Activated B cell treated with CpG ODN at 0.5 μM for 24 hours (primary cell): ENCODE measurements at regions of chr11 and their contacts with region 1.

Region 1: GRCh38 chr11:72080256-72080974 is at the starts of genes LRRC51 and NUMA1:
- DNase-seq: peak; percentile 94
- ATAC-seq: peak; percentile 90
- H3K4me3 Mint-ChIP-seq: peak within 1 kb of the TSS; percentile 95
- H3K27ac Mint-ChIP-seq: peak within 1 kb of the TSS; percentile 91
- H3K4me1 Mint-ChIP-seq: peaks cover 35% of the 10 kb centered on the region
- H3K27me3 Mint-ChIP-seq: no peaks in the 10 kb centered on the region
- CTCF ChIP-seq: no peak
- total RNA-seq, gene LRRC51: 4.1 and 4.5 TPM in 2 replicates
- total RNA-seq, gene NUMA1: 146 and 163 TPM in 2 replicates

Region 2: GRCh38 chr11:70532071-70532450 is 1548.4 kb before region 1 on chr11:
- CTCF ChIA-PET with region 1: no interaction called
- POLR2A ChIA-PET with region 1: no interaction called
- intact Hi-C with region 1: no loop called
- DNase-seq: no peak
- ATAC-seq: no peak
- H3K4me3 Mint-ChIP-seq: no peak overlapping the region
- H3K27ac Mint-ChIP-seq: no peak overlapping the region
- H3K4me1 Mint-ChIP-seq: no peaks in the 10 kb centered on the region
- H3K27me3 Mint-ChIP-seq: no peaks in the 10 kb centered on the region
- CTCF ChIP-seq: no peak

Region 3: GRCh38 chr11:71787098-71787823 is 293.2 kb before region 1 on chr11:
- CTCF ChIA-PET with region 1: no interaction called
- POLR2A ChIA-PET with region 1: no interaction called
- intact Hi-C with region 1: loop called (anchors 1 kb)
- DNase-seq: peak; percentile 95
- ATAC-seq: peak; percentile 95
- H3K4me3 Mint-ChIP-seq: peak overlapping the region; percentile 95
- H3K27ac Mint-ChIP-seq: peak overlapping the region; percentile 96
- H3K4me1 Mint-ChIP-seq: peaks cover 19% of the 10 kb centered on the region
- H3K27me3 Mint-ChIP-seq: no peaks in the 10 kb centered on the region
- CTCF ChIP-seq: no peak

Region 4: DNA sequence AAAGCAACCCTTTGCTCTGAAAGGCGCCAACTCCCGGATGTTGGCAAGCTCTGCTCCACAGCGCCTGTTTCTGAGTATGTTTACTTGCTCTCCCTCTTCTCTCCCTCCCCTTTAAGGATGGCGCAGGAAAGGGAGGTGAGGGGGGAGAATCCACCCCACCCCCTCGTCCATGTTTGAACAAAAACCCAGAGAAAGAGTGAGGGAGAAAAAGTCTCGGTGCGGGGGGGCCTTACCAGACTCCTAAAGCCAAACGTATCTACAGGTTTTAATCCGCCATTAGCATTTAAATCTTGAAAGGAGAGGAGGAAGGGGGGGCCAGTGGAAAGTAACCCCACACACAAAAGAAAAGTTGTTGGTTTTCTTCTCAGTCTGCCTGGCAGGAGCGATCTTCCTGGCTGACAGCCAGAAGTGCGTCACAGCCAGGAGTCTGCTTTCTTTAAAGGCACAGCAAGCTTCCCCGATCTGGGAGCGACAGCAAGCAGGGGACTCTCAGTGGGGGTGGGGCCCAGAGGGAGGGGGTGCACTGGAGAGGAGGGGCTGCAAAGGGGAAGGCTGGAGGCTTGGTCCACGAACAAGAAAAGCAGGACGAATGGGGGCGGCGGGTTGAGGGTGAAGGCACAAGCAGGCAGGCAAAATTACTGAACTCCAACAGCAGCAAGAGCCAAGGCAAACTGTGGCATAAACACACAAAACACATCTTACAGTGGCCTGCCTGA is 39.5 kb before region 1 on chr11:
- CTCF ChIA-PET with region 1: no interaction called
- POLR2A ChIA-PET with region 1: interaction called, 5 read pairs
- intact Hi-C with region 1: loop called (anchors 1 kb)
- DNase-seq: peak; percentile 49
- ATAC-seq: peak; percentile 48
- H3K4me3 Mint-ChIP-seq: no peak overlapping the region
- H3K27ac Mint-ChIP-seq: no peak overlapping the region
- H3K4me1 Mint-ChIP-seq: peaks cover 2% of the 10 kb centered on the region
- H3K27me3 Mint-ChIP-seq: no peaks in the 10 kb centered on the region
- CTCF ChIP-seq: no peak

Region 5: DNA sequence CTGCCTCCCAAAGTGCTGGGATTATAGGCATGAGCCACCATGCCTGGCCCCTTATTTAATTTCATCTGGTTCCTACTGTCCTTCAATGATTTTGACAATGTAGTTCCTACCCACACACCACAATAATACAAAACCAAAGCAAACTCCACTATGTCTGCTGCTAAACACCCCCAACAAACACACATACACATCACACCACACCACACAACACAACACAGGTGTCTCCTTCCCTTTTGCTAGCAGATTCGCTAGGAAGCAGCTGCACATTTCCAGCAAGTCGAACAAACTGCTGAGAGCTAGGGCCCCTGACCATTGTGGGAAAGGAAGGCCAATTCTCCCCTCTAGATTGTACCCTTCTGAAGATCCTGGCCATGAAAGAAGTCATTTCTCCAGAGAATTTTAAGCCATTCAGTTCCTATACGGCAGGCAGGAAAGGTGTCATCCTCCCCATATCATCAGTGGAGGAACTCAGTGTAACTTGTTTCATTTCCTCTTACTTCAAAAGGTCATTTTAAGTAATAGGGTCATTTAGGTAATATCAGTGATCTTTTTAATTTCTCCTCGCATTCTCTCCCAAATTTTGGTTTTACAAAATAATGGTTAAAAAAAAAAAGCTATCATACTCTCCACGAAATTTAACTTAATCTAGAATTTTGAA is 18.5 kb before region 1 on chr11:
- CTCF ChIA-PET with region 1: no interaction called
- POLR2A ChIA-PET with region 1: no interaction called
- intact Hi-C with region 1: no loop called
- DNase-seq: no peak
- ATAC-seq: no peak
- H3K4me3 Mint-ChIP-seq: no peak overlapping the region
- H3K27ac Mint-ChIP-seq: peak overlapping the region; percentile 30
- H3K4me1 Mint-ChIP-seq: peaks cover 7% of the 10 kb centered on the region
- H3K27me3 Mint-ChIP-seq: no peaks in the 10 kb centered on the region
- CTCF ChIP-seq: no peak

Region 6: GRCh38 chr11:72102946-72103753 is 22.7 kb after region 1 on chr11 and contains the start of gene LAMTOR1:
- CTCF ChIA-PET with region 1: no interaction called
- POLR2A ChIA-PET with region 1: interaction called, 6 read pairs
- intact Hi-C with region 1: loop called (anchors 1 kb)
- DNase-seq: peak; percentile 93
- ATAC-seq: peak; percentile 96
- H3K4me3 Mint-ChIP-seq: peak within 1 kb of the TSS; percentile 96
- H3K27ac Mint-ChIP-seq: peak within 1 kb of the TSS; percentile 93
- H3K4me1 Mint-ChIP-seq: peaks cover 46% of the 10 kb centered on the region
- H3K27me3 Mint-ChIP-seq: no peaks in the 10 kb centered on the region
- CTCF ChIP-seq: no peak
- total RNA-seq, gene LAMTOR1: 87.2 and 87.6 TPM in 2 replicates

Region 7: GRCh38 chr11:72112321-72113219 is 32.2 kb after region 1 on chr11 and contains the start of gene ANAPC15:
- CTCF ChIA-PET with region 1: no interaction called
- POLR2A ChIA-PET with region 1: interaction called, 13 read pairs
- intact Hi-C with region 1: loop called (anchors 1 kb)
- DNase-seq: peak; percentile 90
- ATAC-seq: peak; percentile 90
- H3K4me3 Mint-ChIP-seq: peak within 1 kb of the TSS; percentile 97
- H3K27ac Mint-ChIP-seq: peak within 1 kb of the TSS; percentile 100
- H3K4me1 Mint-ChIP-seq: peaks cover 25% of the 10 kb centered on the region
- H3K27me3 Mint-ChIP-seq: peaks cover 13% of the 10 kb centered on the region
- CTCF ChIP-seq: no peak
- total RNA-seq, gene ANAPC15: 44.4 and 56.3 TPM in 2 replicates